ENCODE measurements at regions of chr1 and their contacts with region 1.

Region 1: DNA sequence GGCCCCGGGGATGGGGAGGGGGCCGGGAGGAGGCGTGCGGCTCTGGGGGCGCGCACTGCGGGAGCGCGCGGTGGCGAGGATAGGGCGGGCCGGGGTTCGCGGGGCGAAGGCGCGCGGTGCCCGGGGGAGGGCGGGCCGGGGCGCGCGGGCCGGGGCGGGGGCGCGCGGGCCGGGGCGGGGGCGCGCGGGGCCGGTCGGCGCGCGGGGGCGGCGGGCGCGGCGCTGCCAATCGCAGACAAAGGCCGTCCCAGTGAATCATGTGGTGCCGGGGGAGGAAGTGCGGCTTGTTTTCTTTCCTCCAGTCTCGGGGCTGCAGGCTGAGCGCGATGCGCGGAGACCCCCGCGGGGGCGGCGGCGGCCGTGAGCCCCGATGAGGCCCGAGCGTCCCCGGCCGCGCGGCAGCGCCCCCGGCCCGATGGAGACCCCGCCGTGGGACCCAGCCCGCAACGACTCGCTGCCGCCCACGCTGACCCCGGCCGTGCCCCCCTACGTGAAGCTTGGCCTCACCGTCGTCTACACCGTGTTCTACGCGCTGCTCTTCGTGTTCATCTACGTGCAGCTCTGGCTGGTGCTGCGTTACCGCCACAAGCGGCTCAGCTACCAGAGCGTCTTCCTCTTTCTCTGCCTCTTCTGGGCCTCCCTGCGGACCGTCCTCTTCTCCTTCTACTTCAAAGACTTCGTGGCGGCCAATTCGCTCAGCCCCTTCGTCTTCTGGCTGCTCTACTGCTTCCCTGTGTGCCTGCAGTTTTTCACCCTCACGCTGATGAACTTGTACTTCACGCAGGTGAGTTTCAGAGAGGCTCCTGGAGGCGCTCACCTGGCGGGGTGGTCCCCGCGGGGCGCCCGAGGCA is at the start of gene GPR137B:
- DNase-seq: no peak
- ATAC-seq: peak; percentile 61
- H3K4me3 ChIP-seq: peak within 1 kb of the TSS; percentile 84
- H3K27ac ChIP-seq: peak within 1 kb of the TSS; percentile 62
- H3K4me1 ChIP-seq: peaks cover 17% of the 10 kb centered on the region
- H3K27me3 ChIP-seq: peaks cover 1 to 13% of the 10 kb centered on the region in 2 experiments
- CTCF ChIP-seq: no peak
- EP300 ChIP-seq: no peak
- POLR2A ChIP-seq: peak; percentile 63
- RAD21 ChIP-seq: no peak
- polyA plus RNA-seq, gene GPR137B: 5.4 to 6.4 TPM

Region 2: GRCh38 chr1:236156512-236157208 is 14.2 kb after region 1 on chr1:
- CTCF ChIA-PET with region 1: interaction called, 56 read pairs
- POLR2A ChIA-PET with region 1: interaction called, 64 read pairs
- RAD21 ChIA-PET with region 1: interaction called, 121 read pairs
- SMC1A ChIA-PET with region 1: interaction called, 95 read pairs
- in situ Hi-C with region 1: no loop called
- intact Hi-C with region 1: loop called (anchors 1 kb)
- DNase-seq: peak; percentile 99
- ATAC-seq: peak; percentile 74
- H3K4me3 ChIP-seq: peak overlapping the region; percentile 46; the same call in 1 of the 2 replicates
- H3K27ac ChIP-seq: peak overlapping the region; percentile 99
- H3K4me1 ChIP-seq: peaks cover 61% of the 10 kb centered on the region
- H3K27me3 ChIP-seq: no peaks in the 10 kb centered on the region
- CTCF ChIP-seq: no peak
- EP300 ChIP-seq: peak; percentile 100
- POLR2A ChIP-seq: peak; percentile 67; the same call in 1 of the 2 replicates
- RAD21 ChIP-seq: 0 out of 2 replicates have a peak, but pooled peaks have one; percentile 4